ENCODE measurements at regions of chr10 and their contacts with region 1.

Region 1: GRCh38 chr10:90890347-90890746 is 18.6 kb downstream of the RPP30 start:
- DNase-seq: no peak
- ATAC-seq: no peak
- H3K4me3 ChIP-seq: no peak overlapping the region
- H3K4me3 Mint-ChIP-seq: no peak overlapping the region
- H3K27ac ChIP-seq: no peak overlapping the region
- H3K27ac Mint-ChIP-seq: no peak overlapping the region
- H3K4me1 ChIP-seq: no peaks in the 10 kb centered on the region
- H3K4me1 Mint-ChIP-seq: peaks cover 10% of the 10 kb centered on the region
- H3K27me3 ChIP-seq: no peaks in the 10 kb centered on the region
- H3K27me3 Mint-ChIP-seq: no peaks in the 10 kb centered on the region
- CTCF ChIP-seq: no peak

Region 2: DNA sequence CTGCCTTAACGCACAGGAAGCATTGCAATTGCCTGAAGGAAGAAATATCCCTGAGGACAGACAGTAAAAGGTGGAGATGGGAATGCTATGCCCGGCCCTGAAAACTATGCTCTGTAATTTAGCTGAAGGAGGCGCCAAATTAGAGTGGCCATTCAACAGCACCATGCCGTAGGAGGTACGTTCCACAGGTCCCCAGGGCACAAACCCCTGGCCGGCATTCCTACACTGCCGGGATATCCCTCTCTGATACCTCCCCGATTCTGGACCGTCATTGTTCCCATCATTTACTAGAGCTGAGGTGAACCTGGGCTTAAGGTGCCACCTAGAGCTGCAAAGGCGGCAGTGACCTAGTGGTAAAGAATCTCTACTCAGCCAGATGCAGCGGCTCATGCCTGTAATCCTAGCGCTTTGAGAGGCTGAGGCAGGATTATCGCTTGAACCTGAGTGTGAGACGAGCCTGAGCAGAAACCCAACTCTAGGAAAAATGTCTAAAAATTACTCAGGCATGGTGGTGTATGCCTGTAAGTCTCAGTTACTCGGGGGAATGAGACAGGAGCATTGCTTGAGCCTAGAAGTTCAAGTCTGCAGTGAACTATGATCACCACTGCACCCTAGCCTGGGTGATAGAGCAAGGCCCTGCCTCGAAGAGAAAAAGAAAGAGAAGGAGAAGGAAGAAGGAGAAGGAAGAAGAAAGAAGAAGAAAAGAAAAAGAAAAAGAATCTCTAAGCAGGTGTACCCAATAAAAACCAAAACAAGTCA is 854.9 kb after region 1 on chr10:
- CTCF ChIA-PET with region 1: no interaction called
- POLR2A ChIA-PET with region 1: no interaction called
- intact Hi-C with region 1: loop called in 1 of 2 experiments (anchors 5 kb)
- DNase-seq: no peak
- ATAC-seq: no peak
- H3K4me3 ChIP-seq: no peak overlapping the region
- H3K4me3 Mint-ChIP-seq: no peak overlapping the region
- H3K27ac ChIP-seq: no peak overlapping the region
- H3K27ac Mint-ChIP-seq: no peak overlapping the region
- H3K4me1 ChIP-seq: no peaks in the 10 kb centered on the region
- H3K4me1 Mint-ChIP-seq: no peaks in the 10 kb centered on the region
- H3K27me3 ChIP-seq: peaks cover 0 to 5% of the 10 kb centered on the region in 2 experiments
- H3K27me3 Mint-ChIP-seq: peaks cover 45% of the 10 kb centered on the region
- CTCF ChIP-seq: no peak

Measured in CD8-positive, alpha-beta T cell (primary cell).